T-cell (primary cell): ENCODE measurements at regions of chr2 and their contacts with region 1.

Region 1: GRCh38 chr2:186919296-186919695 is 70.3 kb upstream of the ZSWIM2 start:
- DNase-seq: no peak
- ATAC-seq: no peak
- H3K4me3 ChIP-seq: no peak overlapping the region
- H3K4me3 Mint-ChIP-seq: no peak overlapping the region
- H3K27ac ChIP-seq: no peak overlapping the region
- H3K27ac Mint-ChIP-seq: no peak overlapping the region
- H3K4me1 ChIP-seq: no peaks in the 10 kb centered on the region
- H3K4me1 Mint-ChIP-seq: no peaks in the 10 kb centered on the region
- H3K27me3 ChIP-seq: no peaks in the 10 kb centered on the region
- H3K27me3 Mint-ChIP-seq: no peaks in the 10 kb centered on the region

Region 2: DNA sequence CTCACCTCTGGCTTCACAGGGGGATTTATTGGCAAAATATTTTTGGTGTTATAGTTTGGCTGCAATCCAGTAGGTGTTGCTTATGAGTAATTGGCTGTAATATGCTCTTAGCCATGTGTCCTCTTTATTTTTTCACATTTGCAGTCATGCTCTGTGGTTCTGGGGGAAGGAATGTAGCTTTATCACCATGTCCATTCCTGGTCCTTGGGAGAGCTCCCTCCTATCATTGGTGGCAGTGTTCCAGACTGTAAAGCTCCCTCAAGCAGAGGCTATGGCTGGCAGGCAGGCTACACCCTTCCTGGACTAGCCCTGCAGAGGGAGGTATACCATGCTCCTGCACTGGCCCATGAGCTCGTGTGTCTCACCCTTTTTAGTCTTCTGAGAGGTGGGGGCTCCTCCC is 1300.7 kb before region 1 on chr2:
- CTCF ChIA-PET with region 1: no interaction called
- POLR2A ChIA-PET with region 1: interaction called in 1 of 2 experiments, 14 read pairs
- DNase-seq: no peak
- ATAC-seq: no peak
- H3K4me3 ChIP-seq: no peak overlapping the region
- H3K4me3 Mint-ChIP-seq: no peak overlapping the region
- H3K27ac ChIP-seq: no peak overlapping the region
- H3K27ac Mint-ChIP-seq: no peak overlapping the region
- H3K4me1 ChIP-seq: no peaks in the 10 kb centered on the region
- H3K4me1 Mint-ChIP-seq: no peaks in the 10 kb centered on the region
- H3K27me3 ChIP-seq: no peaks in the 10 kb centered on the region
- H3K27me3 Mint-ChIP-seq: no peaks in the 10 kb centered on the region

Region 3: GRCh38 chr2:186533717-186534116 is 385.6 kb before region 1 on chr2:
- CTCF ChIA-PET with region 1: no interaction called
- POLR2A ChIA-PET with region 1: no interaction called
- DNase-seq: no peak
- ATAC-seq: no peak
- H3K4me3 ChIP-seq: no peak overlapping the region
- H3K4me3 Mint-ChIP-seq: no peak overlapping the region
- H3K27ac ChIP-seq: no peak overlapping the region
- H3K27ac Mint-ChIP-seq: no peak overlapping the region
- H3K4me1 ChIP-seq: no peaks in the 10 kb centered on the region
- H3K4me1 Mint-ChIP-seq: no peaks in the 10 kb centered on the region
- H3K27me3 ChIP-seq: no peaks in the 10 kb centered on the region
- H3K27me3 Mint-ChIP-seq: peaks cover 0 to 15% of the 10 kb centered on the region in 2 donors

Region 4: GRCh38 chr2:186734957-186735734 is 184.2 kb before region 1 on chr2:
- CTCF ChIA-PET with region 1: no interaction called
- POLR2A ChIA-PET with region 1: no interaction called
- DNase-seq: no peak
- ATAC-seq: no peak
- H3K4me3 ChIP-seq: no peak overlapping the region
- H3K4me3 Mint-ChIP-seq: no peak overlapping the region
- H3K27ac ChIP-seq: no peak overlapping the region
- H3K27ac Mint-ChIP-seq: no peak overlapping the region
- H3K4me1 ChIP-seq: no peaks in the 10 kb centered on the region
- H3K4me1 Mint-ChIP-seq: no peaks in the 10 kb centered on the region
- H3K27me3 ChIP-seq: peaks cover 0 to 16% of the 10 kb centered on the region in 2 experiments
- H3K27me3 Mint-ChIP-seq: peaks cover 4 to 12% of the 10 kb centered on the region in 2 donors